ENCODE measurements at regions of chr13 and their contacts with region 1.

Region 1: GRCh38 chr13:52128714-52129700 is at the start of gene NEK5:
- DNase-seq: peak; percentile 66
- ATAC-seq: peak; percentile 84
- H3K4me3 Mint-ChIP-seq: peak within 1 kb of the TSS; percentile 71
- H3K27ac Mint-ChIP-seq: no peak within 1 kb of the TSS
- H3K4me1 Mint-ChIP-seq: peaks cover 14% of the 10 kb centered on the region
- H3K27me3 Mint-ChIP-seq: peaks cover 21% of the 10 kb centered on the region
- total RNA-seq, gene NEK5: not detected

Region 2: GRCh38 chr13:51885651-51886050 is 243.4 kb before region 1 on chr13:
- CTCF ChIA-PET with region 1: no interaction called
- DNase-seq: no peak
- ATAC-seq: no peak
- H3K4me3 Mint-ChIP-seq: no peak overlapping the region
- H3K27ac Mint-ChIP-seq: no peak overlapping the region
- H3K4me1 Mint-ChIP-seq: no peaks in the 10 kb centered on the region
- H3K27me3 Mint-ChIP-seq: peaks cover 20% of the 10 kb centered on the region

Region 3: GRCh38 chr13:51895906-51896888 is 232.8 kb before region 1 on chr13:
- CTCF ChIA-PET with region 1: interaction called, 32 read pairs
- DNase-seq: peak; percentile 71
- ATAC-seq: peak; percentile 80
- H3K4me3 Mint-ChIP-seq: no peak overlapping the region
- H3K27ac Mint-ChIP-seq: no peak overlapping the region
- H3K4me1 Mint-ChIP-seq: peaks cover 3% of the 10 kb centered on the region
- H3K27me3 Mint-ChIP-seq: peaks cover 32% of the 10 kb centered on the region

Region 4: GRCh38 chr13:52001120-52001731 is 127.8 kb before region 1 on chr13:
- CTCF ChIA-PET with region 1: interaction called, 22 read pairs
- DNase-seq: no peak
- ATAC-seq: peak; percentile 82
- H3K4me3 Mint-ChIP-seq: no peak overlapping the region
- H3K27ac Mint-ChIP-seq: no peak overlapping the region
- H3K4me1 Mint-ChIP-seq: peaks cover under 1% of the 10 kb centered on the region
- H3K27me3 Mint-ChIP-seq: peaks cover 23% of the 10 kb centered on the region

Region 5: GRCh38 chr13:52011632-52012511 is 117.1 kb before region 1 on chr13 and contains the start of gene ALG11:
- CTCF ChIA-PET with region 1: interaction called, 13 read pairs
- DNase-seq: peak; percentile 99
- ATAC-seq: peak; percentile 99
- H3K4me3 Mint-ChIP-seq: peak within 1 kb of the TSS; percentile 100
- H3K27ac Mint-ChIP-seq: peak within 1 kb of the TSS; percentile 92
- H3K4me1 Mint-ChIP-seq: peaks cover 16% of the 10 kb centered on the region
- H3K27me3 Mint-ChIP-seq: peaks cover 34% of the 10 kb centered on the region
- total RNA-seq, gene ALG11: 23.9 to 28.9 TPM

Region 6: DNA sequence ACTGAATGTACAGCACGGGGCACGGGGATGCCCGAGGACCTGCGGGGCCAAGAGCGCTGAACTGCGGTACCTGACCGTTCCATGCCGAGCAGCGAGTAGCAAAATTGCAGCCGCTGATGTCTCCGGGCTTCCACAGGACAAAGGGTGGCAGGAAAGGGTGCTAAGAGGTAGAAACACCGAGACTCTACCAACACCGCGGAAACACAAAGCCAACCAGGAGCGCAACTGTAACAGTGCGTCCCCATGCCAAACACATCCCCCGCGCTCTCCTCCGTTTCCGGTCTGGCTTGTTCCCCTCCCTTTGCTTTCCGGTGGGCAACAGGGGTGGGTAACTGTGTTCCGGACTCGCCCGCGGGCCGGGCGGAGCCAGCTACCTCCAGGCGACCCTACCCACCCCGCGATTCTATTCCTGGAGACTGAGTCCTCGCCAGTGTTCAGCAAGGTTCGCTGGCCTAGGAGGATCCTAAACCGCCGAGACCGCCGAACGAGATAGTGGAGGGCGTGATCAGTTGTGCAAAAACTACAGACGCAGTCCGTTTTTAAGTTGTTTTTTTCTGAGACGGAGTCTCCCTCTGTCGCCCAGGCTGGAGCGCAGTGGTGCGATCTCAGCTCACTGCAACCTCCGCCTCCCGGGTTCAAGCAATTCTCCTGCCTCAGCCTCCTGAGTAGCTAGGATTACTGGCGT is 65.3 kb after region 1 on chr13:
- CTCF ChIA-PET with region 1: interaction called, 10 read pairs
- DNase-seq: peak; percentile 92
- ATAC-seq: peak; percentile 91
- H3K4me3 Mint-ChIP-seq: peak overlapping the region; percentile 86
- H3K27ac Mint-ChIP-seq: peak overlapping the region; percentile 96
- H3K4me1 Mint-ChIP-seq: peaks cover 27% of the 10 kb centered on the region
- H3K27me3 Mint-ChIP-seq: no peaks in the 10 kb centered on the region